Sciatic nerve (tissue), 2 donors: ENCODE measurements at regions of chr1 and their contacts with region 1.

Region 1: DNA sequence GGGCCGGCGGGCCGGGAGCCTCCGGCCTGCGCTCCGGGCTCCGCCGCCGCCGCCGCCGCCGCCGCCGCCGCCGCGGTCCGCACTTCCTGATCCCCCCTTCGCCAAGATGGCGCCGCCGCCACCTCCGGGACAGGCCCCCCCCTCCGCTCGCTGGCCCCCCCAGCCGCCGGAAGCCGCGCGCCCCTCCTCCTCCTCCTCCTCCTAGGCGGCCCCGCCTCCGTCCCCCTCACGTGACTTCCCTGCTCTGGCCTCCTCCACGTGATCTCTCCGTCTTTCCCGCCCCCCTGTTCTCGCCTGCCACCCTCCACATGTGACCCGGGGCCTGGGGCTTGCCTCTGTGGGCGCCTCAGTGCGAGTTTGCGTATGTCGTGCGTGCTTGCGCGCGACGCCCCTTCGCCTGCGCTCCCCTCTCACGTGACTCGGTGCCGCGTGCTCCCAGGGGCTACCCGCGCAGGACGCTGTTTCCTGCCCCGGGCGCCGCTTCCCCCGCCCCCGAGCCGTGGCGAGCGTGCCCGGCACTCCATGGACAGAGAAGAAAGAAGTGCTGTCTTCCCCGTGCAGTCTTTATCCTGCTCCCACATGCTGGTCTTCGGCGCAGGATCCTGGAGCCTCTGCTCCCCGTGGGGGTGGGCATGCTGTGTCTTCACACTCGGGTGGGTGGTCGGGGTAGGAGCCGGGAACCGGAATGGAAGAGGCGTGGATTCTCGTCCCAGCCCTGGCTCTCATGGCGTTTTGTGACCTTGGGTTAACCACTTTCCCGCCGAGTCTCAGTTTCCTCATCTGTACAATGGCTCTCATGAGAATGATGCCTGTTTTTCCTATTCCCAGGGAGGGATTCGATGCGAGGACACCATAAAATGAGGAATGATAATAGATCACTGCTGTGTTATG is at the start of gene UBE2Q1:
- DNase-seq: peak; percentile 100
- ATAC-seq: peak; percentile 99
- total RNA-seq, gene UBE2Q1: 67.4 TPM

Region 2: DNA sequence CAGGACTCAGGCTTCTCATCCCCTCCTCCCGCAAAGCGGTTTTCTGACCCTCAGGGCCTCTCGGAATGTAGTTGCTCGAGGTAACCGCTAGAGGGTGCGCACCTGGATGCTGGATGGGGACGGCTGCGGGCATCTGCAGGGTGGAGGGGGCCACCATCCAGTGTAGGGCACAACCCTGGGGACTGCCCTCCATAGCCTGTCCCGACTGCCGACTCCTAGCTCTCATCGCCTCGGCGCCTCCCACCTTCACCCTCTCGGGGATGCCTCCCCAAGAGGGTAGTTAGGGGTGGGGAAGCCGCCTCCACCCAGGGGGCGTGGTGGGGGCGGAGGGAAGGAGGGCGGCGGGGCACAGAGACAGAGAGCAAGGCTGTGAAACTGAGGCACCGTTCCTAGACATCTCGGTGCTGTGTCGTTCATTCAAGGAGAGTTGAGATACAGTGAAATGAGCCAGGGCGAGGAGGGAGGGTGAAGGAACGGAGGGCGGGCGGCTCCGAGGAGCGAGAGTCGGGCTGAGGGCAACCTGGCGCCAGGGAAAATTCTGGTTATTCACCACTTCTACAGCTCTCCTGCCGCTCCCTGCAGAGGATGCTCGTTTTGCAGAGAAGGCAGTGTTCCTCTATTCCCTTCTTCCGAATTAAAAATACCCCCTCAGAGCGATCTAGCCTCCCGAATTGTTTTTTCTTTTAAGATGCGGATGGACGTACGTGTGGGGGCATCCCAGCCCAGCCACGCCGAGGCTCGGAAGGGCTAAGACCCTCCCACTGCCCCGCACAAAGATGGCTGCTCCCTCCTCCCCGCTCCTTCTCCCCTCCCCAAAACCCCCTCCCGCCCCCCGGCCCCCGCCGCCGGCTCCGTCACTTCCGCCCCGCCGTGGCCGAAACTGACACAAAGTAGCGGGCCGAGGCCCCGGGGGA is 233.9 kb before region 1 on chr1 and contains the start of gene ATP8B2:
- intact Hi-C with region 1: loop called (anchors 10 kb)
- DNase-seq: peak; percentile 87
- ATAC-seq: peak; percentile 67
- total RNA-seq, gene ATP8B2: 78.3 TPM

Region 3: GRCh38 chr1:154878371-154879022 is 319.7 kb after region 1 on chr1:
- intact Hi-C with region 1: loop called (anchors 5 kb)
- DNase-seq: peak; percentile 88
- ATAC-seq: peak; percentile 96

Region 4: DNA sequence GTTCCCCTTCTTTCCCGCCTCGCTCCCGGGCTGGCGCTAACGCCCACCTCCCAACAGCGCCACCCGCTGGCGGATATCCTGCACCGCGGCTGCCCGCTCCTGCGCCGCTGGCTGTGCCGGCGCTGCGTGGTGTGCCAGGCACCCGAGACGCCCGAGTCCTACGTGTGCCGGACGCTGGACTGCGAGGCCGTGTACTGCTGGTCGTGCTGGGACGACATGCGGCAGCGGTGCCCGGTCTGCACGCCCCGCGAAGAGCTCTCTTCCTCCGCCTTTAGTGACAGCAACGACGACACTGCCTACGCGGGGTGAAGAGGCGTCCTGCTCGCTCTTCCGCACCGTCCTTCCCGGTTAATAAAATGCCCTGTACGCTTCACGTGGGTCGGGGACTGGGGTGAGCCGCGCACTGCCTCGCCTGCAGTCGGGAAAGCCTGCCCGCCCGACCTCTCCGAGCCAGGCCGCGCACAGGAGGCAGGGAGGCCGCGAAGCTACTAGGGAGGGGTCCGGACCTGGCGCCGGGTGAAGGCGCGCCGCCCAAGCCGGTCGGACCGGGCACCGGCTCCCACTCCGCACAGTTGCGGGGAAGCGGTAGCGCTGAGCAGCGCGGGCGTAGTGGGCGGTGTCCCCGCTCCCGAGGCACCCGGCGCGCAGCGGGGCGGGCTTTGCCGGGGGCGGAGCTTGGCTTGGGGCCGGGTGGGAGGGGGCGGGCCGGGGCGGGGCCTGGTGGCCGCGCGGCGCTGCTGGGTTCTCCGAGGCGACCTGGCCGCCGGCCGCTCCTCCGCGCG is 491.9 kb after region 1 on chr1 and contains the start of gene ADAM15:
- intact Hi-C with region 1: loop called (anchors 1 kb)
- DNase-seq: peak; percentile 93
- ATAC-seq: peak; percentile 81
- total RNA-seq, gene ADAM15: 147 TPM